ENCODE measurements at regions of chr4 and their contacts with region 1.

Region 1: GRCh38 chr4:57110640-57111511 is 691 bp upstream of the IGFBP7 start:
- DNase-seq: peak; percentile 23 to 42
- ATAC-seq: peak; percentile 34 to 62 (median 58)
- H3K4me3 ChIP-seq: peak overlapping the region; percentile 39
- H3K4me3 Mint-ChIP-seq: peak overlapping the region; percentile 98
- H3K27ac ChIP-seq: peak overlapping the region; percentile 74
- H3K27ac Mint-ChIP-seq: peak overlapping the region; percentile 91 to 97
- H3K4me1 ChIP-seq: peaks cover 39% of the 10 kb centered on the region
- H3K4me1 Mint-ChIP-seq: peaks cover 87% of the 10 kb centered on the region in 2 donors
- H3K27me3 ChIP-seq: no peaks in the 10 kb centered on the region
- H3K27me3 Mint-ChIP-seq: no peaks in the 10 kb centered on the region
- CTCF ChIP-seq: no peak

Region 2: GRCh38 chr4:57074744-57075143 is 36.1 kb before region 1 on chr4:
- intact Hi-C with region 1: loop called (anchors 5 kb)
- DNase-seq: no peak
- ATAC-seq: no peak
- H3K4me3 ChIP-seq: no peak overlapping the region
- H3K4me3 Mint-ChIP-seq: no peak overlapping the region
- H3K27ac ChIP-seq: no peak overlapping the region
- H3K27ac Mint-ChIP-seq: peak overlapping the region; percentile 10 to 51
- H3K4me1 ChIP-seq: peaks cover 10% of the 10 kb centered on the region
- H3K4me1 Mint-ChIP-seq: peaks cover 75 to 89% of the 10 kb centered on the region in 2 donors
- H3K27me3 ChIP-seq: no peaks in the 10 kb centered on the region
- H3K27me3 Mint-ChIP-seq: no peaks in the 10 kb centered on the region
- CTCF ChIP-seq: no peak

Region 3: GRCh38 chr4:57091657-57092162 is 19.2 kb before region 1 on chr4:
- intact Hi-C with region 1: loop called (anchors 2 kb)
- DNase-seq: no peak
- ATAC-seq: no peak
- H3K4me3 ChIP-seq: no peak overlapping the region
- H3K4me3 Mint-ChIP-seq: no peak overlapping the region
- H3K27ac ChIP-seq: no peak overlapping the region
- H3K27ac Mint-ChIP-seq: peak overlapping the region; percentile 61 to 84
- H3K4me1 ChIP-seq: peaks cover 8% of the 10 kb centered on the region
- H3K4me1 Mint-ChIP-seq: peaks cover 61 to 67% of the 10 kb centered on the region in 2 donors
- H3K27me3 ChIP-seq: no peaks in the 10 kb centered on the region
- H3K27me3 Mint-ChIP-seq: no peaks in the 10 kb centered on the region
- CTCF ChIP-seq: no peak